ENCODE measurements at regions of chr19 and their contacts with region 1.

Region 1: DNA sequence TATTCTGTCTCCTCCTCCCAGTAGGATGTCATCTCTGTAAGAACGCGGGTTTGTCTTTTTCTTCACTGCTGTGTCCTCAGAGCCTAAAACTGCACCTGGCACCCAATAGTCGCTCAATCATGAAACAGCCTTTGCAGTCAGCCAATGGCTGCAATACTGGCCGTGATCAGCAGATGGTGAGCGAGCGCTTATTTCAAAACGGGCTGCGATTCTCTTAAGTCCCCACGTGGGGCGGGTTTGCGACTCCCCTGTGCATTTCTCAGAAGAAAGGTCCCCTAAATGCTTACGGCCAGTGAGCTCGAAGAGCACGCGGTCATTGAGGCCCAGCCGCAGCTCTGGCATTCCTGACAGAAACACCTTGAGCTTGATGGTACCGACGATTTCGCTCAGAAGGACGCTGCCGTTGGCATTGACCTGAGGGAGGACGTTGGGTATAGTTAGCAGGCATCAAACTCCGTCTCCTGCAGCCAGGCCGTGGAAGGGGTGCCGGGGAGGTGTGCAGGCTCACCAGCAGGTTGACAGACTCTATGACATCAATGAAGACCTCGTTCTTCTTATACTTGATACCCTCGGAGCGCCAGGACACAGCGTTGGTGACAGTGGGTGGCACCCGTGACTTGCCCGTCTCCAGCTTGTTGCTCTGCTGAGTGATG is 6.0 kb downstream of the AP1M2 start:
- DNase-seq: peak; percentile 88
- ATAC-seq: peak; percentile 83 to 92

Region 2: GRCh38 chr19:10533646-10534386 is 47.3 kb before region 1 on chr19:
- intact Hi-C with region 1: no loop called
- DNase-seq: no peak
- ATAC-seq: peak in 1 of 2 donors; percentile 48

Region 3: GRCh38 chr19:10644260-10645007 is 63.3 kb after region 1 on chr19:
- intact Hi-C with region 1: loop called (anchors 1 to 2 kb)
- DNase-seq: peak; percentile 87
- ATAC-seq: peak; percentile 85 to 88

Region 4: DNA sequence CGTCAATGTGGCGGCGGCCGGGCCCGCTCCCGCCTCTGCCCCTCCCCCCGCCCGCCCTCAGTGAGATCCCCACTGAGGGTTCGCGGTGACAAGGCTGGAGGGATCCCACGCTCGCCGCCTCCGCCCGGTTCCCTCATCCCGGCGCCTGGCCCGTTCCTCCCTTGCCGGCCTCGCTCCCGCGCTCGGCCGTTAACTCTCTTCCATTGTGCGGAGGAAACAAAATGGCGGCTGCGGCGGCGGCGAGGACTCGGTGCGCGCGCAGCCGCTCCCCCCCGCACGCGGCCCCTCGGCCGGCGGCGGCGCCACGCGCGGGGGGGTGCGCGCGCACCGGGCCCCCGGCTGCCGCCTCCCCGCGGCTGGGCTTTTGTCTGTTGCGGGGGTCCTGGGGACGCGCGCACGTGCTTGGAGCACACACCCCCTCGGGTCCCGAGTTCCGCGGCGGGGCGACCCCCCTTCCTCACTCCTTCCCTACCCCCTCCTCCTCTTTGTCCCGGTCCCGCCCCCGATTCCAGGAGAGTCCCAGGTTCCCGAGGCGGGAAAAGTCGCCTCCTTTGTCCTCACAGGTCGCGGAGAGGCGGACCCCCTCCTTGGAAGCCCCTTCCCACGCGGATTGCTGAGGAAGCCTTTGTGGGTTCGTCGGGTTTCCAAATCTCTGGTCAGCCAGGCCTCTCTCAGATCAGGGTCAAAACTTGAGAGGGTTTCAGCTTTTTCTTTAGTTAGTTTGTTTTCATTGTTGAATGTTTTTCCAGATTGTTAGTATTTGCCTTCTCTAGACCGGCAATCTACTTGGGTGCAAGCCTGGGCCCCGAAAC is 73.6 kb after region 1 on chr19:
- intact Hi-C with region 1: no loop called
- DNase-seq: peak; percentile 58
- ATAC-seq: peak; percentile 39 to 41